Transverse colon (tissue), 4 donors: ENCODE measurements at regions of chr10 and their contacts with region 1.

Region 1: DNA sequence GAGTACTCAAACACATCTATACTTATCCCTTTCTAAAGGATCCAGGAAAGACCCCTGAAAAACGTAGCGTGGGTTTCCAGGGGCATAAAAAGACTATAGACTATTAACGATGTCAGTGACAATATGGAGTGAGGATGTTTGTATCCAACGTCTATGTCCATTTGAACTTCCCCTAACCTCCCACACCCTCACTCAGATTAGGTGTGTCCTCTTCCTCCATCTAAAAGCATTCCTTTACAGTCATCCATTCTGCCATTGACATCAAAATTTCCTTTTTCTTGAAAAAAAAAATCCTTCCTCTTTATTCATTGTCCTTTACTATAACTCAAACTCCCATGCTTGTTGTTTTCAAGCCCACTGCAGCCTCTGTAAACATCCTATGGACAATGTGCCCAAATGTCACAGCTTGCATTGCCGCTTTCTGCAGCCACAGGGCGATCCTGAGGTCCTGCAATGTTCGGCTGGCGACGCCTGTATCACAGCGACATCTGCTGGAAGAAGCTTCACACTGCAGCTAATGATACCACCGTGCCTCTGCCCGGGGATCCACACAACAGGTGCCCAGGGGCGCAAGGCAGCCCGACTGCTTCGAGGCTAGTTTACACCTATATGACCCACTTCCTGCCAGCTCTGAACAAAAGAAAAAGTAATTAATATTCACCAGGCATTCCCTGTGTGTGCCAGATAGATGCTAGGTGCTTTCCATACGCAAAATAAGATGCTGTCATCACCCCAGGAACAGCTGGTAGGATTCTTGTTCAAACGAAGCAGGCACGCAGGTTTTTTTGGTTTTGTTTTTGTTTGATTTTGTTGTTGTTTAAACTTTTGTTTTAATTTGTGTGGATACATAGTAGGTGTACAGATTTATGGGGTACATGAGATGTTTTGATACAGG is 267.9 kb upstream of the GHITM start:
- DNase-seq: peak; percentile 66
- H3K4me3 ChIP-seq: no peak overlapping the region
- H3K27ac ChIP-seq: no peak overlapping the region
- H3K4me1 ChIP-seq: no peaks in the 10 kb centered on the region
- H3K27me3 ChIP-seq: no peaks in the 10 kb centered on the region
- CTCF ChIP-seq: peak; percentile 73 to 88 (median 87)
- EP300 ChIP-seq: no peak
- POLR2A ChIP-seq: no peak

Region 2: GRCh38 chr10:82811621-82812020 is 1059.8 kb before region 1 on chr10:
- in situ Hi-C with region 1: loop called in 1 of 4 experiments (anchors 25 kb)
- intact Hi-C with region 1: no loop called
- DNase-seq: no peak
- H3K4me3 ChIP-seq: no peak overlapping the region
- H3K27ac ChIP-seq: no peak overlapping the region
- H3K4me1 ChIP-seq: no peaks in the 10 kb centered on the region
- H3K27me3 ChIP-seq: no peaks in the 10 kb centered on the region
- CTCF ChIP-seq: peak in 2 of 5 experiments; percentile 21 to 38
- EP300 ChIP-seq: no peak
- POLR2A ChIP-seq: no peak

Region 3: DNA sequence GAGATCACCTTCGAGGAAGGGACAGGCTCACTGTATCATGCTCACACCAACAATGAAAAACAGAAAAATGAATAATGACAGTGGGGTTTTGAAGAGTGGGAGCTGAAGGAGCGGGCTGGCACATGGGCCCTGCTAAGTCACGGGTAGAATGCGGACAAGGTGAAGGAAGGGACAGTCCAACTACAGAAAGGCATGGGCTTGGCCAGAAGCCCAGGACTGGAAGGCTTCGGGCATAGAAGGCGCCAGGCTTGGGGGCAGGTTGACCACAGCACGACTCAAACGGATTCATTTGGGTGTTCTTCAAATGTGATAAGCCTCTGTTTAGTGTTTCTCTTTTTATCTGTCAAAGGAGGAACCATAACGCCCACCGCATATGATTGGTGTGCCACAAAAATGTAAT is 966.4 kb after region 1 on chr10:
- in situ Hi-C with region 1: no loop called
- intact Hi-C with region 1: no loop called
- DNase-seq: no peak
- H3K4me3 ChIP-seq: no peak overlapping the region
- H3K27ac ChIP-seq: no peak overlapping the region
- H3K4me1 ChIP-seq: no peaks in the 10 kb centered on the region
- H3K27me3 ChIP-seq: no peaks in the 10 kb centered on the region
- CTCF ChIP-seq: no peak
- EP300 ChIP-seq: no peak
- POLR2A ChIP-seq: no peak